A549 (cell line): ENCODE measurements at regions of chr3 and their contacts with region 1.

Region 1: GRCh38 chr3:100725935-100726513 is 16.7 kb downstream of the TFG start:
- DNase-seq: no peak
- ATAC-seq: no peak; a peak in 2 of 6 replicates
- H3K4me3 ChIP-seq: no peak overlapping the region
- H3K27ac ChIP-seq: no peak overlapping the region
- H3K4me1 ChIP-seq: no peaks in the 10 kb centered on the region; the same call in 2 of the 3 replicates
- CTCF ChIP-seq: no peak
- EP300 ChIP-seq: no peak
- POLR2A ChIP-seq: no peak
- RAD21 ChIP-seq: no peak

Region 2: GRCh38 chr3:100697172-100697571 is 28.9 kb before region 1 on chr3:
- CTCF ChIA-PET with region 1: no interaction called
- POLR2A ChIA-PET with region 1: no interaction called
- DNase-seq: no peak
- ATAC-seq: peak in 1 of 2 experiments; percentile 38; a peak in 2 of 6 replicates
- H3K4me3 ChIP-seq: no peak overlapping the region
- H3K27ac ChIP-seq: no peak overlapping the region
- H3K4me1 ChIP-seq: no peaks in the 10 kb centered on the region
- CTCF ChIP-seq: no peak
- EP300 ChIP-seq: no peak
- POLR2A ChIP-seq: no peak
- RAD21 ChIP-seq: no peak

Region 3: GRCh38 chr3:100737334-100737733 is 11.3 kb after region 1 on chr3:
- CTCF ChIA-PET with region 1: interaction called, 12 read pairs
- POLR2A ChIA-PET with region 1: interaction called, 3 read pairs
- DNase-seq: peak; percentile 9 to 17
- ATAC-seq: peak; percentile 72 to 76; a peak in 5 of 6 replicates
- H3K4me3 ChIP-seq: no peak overlapping the region
- H3K27ac ChIP-seq: no peak overlapping the region
- H3K4me1 ChIP-seq: peaks cover 6% of the 10 kb centered on the region; the same call in 1 of the 3 replicates
- CTCF ChIP-seq: peak; percentile 57
- EP300 ChIP-seq: no peak
- POLR2A ChIP-seq: no peak
- RAD21 ChIP-seq: peak; percentile 52 to 59; a peak in 4 of 5 replicates

Region 4: DNA sequence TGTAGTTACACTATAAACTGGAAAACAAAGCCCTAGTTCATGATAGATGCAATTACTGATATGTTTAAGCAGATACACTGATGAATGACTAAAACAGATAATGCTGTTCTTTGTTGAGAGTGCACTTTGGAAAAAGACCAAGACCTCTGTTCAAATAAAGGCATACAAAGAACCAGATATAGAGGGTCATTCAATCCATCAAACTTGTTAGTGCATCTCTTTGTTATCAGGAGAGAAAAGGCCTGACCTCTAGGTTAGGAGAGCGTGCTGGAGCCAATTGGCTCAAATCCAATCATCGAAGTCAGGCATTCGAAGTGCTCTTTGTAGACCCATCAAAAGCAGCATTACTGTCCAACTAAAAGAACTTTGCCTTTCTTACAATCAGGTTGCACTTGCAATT is 107.5 kb after region 1 on chr3:
- CTCF ChIA-PET with region 1: no interaction called
- POLR2A ChIA-PET with region 1: no interaction called
- DNase-seq: no peak
- ATAC-seq: no peak
- H3K4me3 ChIP-seq: no peak overlapping the region
- H3K27ac ChIP-seq: no peak overlapping the region
- H3K4me1 ChIP-seq: no peaks in the 10 kb centered on the region
- CTCF ChIP-seq: no peak
- EP300 ChIP-seq: no peak
- POLR2A ChIP-seq: no peak
- RAD21 ChIP-seq: no peak